ENCODE measurements at regions of chr3 and their contacts with region 1.

Region 1: GRCh38 chr3:117997201-117998049 is 1037.2 kb downstream of the IGSF11 start:
- DNase-seq: peak; percentile 70
- H3K4me3 ChIP-seq: peak overlapping the region; percentile 96
- H3K27ac ChIP-seq: peak overlapping the region; percentile 13
- H3K27me3 ChIP-seq: no peaks in the 10 kb centered on the region
- CTCF ChIP-seq: peak; percentile 98

Region 2: GRCh38 chr3:117526470-117527079 is 470.9 kb before region 1 on chr3:
- CTCF ChIA-PET with region 1: interaction called, 12 read pairs
- POLR2A ChIA-PET with region 1: no interaction called
- DNase-seq: no peak
- H3K4me3 ChIP-seq: no peak overlapping the region
- H3K27ac ChIP-seq: no peak overlapping the region
- H3K27me3 ChIP-seq: no peaks in the 10 kb centered on the region
- CTCF ChIP-seq: peak; percentile 70

Region 3: DNA sequence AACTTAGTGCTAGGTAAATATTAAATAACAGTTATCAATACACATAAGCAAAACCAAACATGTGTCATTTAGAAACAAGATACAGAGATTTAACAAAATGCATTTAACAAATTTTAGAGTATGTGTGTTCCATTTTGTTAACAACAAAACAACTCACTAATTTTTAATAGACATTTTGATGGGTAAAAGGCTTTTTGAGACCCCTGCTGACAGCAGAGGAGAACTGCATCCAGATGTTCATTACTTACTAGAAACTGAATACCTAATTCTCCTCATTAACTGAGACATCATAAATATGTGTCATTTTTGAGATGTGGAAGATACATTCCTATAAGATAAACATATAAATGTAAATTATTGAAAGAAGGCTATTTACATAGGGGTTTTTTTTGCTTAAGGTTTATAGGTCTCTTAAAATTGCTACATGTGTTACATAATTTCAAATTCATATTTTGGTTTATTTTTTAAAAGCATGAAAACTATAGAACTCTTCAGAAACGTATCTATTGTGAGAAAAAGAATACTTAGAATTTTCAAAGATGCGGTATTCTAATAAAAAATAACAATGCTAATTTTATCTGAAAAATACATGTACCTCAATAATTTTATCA is 278.0 kb before region 1 on chr3:
- CTCF ChIA-PET with region 1: interaction called, 12 read pairs
- POLR2A ChIA-PET with region 1: no interaction called
- DNase-seq: no peak
- H3K4me3 ChIP-seq: no peak overlapping the region
- H3K27ac ChIP-seq: no peak overlapping the region
- H3K27me3 ChIP-seq: no peaks in the 10 kb centered on the region
- CTCF ChIP-seq: peak; percentile 85

Region 4: DNA sequence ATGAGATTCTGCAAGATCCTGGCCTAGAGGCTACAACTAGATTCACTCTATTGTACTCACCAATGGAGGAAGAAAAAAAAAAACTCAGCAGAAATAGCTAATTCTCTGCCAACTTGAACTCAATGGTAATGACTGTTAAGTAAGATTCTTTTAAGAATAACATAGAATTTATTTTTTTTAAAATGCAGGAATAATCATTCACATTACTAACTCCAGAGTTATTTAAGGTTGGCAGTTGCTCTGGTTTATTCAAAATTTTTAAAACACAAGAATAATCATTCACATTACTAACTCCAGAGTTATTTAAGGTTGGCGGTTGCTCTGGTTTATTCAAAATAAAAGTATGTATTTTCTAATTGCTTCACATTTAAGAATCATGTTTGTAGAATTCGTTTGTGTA is 34.7 kb before region 1 on chr3:
- CTCF ChIA-PET with region 1: interaction called, 16 read pairs
- POLR2A ChIA-PET with region 1: no interaction called
- DNase-seq: peak; percentile 15
- H3K4me3 ChIP-seq: no peak overlapping the region
- H3K27ac ChIP-seq: no peak overlapping the region
- H3K27me3 ChIP-seq: no peaks in the 10 kb centered on the region
- CTCF ChIP-seq: no peak

Region 5: GRCh38 chr3:118011910-118012309 is 14.5 kb after region 1 on chr3:
- CTCF ChIA-PET with region 1: interaction called, 29 read pairs
- POLR2A ChIA-PET with region 1: no interaction called
- DNase-seq: no peak
- H3K4me3 ChIP-seq: no peak overlapping the region
- H3K27ac ChIP-seq: no peak overlapping the region
- H3K27me3 ChIP-seq: no peaks in the 10 kb centered on the region
- CTCF ChIP-seq: no peak

Region 6: DNA sequence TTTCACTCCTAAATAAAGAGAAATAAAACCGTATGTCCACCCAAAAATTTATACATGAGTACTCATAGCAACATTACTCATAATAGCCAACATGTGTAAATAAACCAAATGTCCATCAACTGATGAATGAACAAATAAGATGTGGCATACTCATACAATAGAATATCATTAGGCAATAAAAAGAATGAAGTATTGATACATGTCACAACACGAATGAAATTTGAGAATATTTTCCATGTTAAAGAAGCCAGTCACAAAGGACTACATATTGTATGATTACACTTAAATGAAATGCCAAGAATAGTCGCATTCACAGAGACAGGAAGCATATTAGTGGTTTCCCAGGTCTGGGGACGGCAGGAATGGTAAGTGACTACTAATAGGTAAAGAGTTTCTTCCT is 168.0 kb after region 1 on chr3:
- CTCF ChIA-PET with region 1: no interaction called
- POLR2A ChIA-PET with region 1: no interaction called
- DNase-seq: no peak
- H3K4me3 ChIP-seq: no peak overlapping the region
- H3K27ac ChIP-seq: no peak overlapping the region
- H3K27me3 ChIP-seq: no peaks in the 10 kb centered on the region
- CTCF ChIP-seq: no peak

Region 7: DNA sequence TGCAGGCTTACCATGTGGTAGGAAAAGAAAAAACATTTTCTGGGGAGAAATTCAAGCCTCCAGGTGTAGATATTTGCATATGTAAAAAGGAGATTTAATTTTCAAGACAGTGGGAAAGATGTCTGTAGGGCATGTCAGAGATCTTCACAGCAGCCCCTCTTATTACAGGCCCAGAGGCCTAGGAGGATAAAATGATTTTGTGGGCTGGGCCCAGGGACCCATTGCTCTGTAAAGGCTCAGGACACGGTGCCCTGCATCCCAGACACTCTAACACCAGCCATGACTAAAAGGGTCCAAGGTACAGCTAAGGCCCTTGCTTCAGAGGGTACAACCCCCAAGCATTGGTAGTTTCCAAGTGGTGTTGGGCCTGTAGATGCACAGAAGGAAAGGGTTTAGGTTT is 357.1 kb after region 1 on chr3:
- CTCF ChIA-PET with region 1: no interaction called
- POLR2A ChIA-PET with region 1: no interaction called
- DNase-seq: no peak
- H3K4me3 ChIP-seq: no peak overlapping the region
- H3K27ac ChIP-seq: no peak overlapping the region
- H3K27me3 ChIP-seq: no peaks in the 10 kb centered on the region
- CTCF ChIP-seq: no peak